CD4-positive, alpha-beta memory T cell (primary cell): ENCODE measurements at regions of chr6 and their contacts with region 1.

Region 1: GRCh38 chr6:33271458-33272274 is at the starts of genes RPS18 and VPS52:
- DNase-seq: peak; percentile 95 to 98 (median 96)
- H3K4me3 ChIP-seq: peak within 1 kb of the TSS; percentile 75 to 90
- H3K4me3 Mint-ChIP-seq: peak within 1 kb of the TSS; percentile 96 to 100 (median 98)
- H3K27ac ChIP-seq: peak within 1 kb of the TSS; percentile 85
- H3K27ac Mint-ChIP-seq: peak within 1 kb of the TSS; percentile 97 to 100 (median 99)
- H3K4me1 ChIP-seq: peaks cover 62% of the 10 kb centered on the region
- H3K4me1 Mint-ChIP-seq: peaks cover 43 to 78% (median 61%) of the 10 kb centered on the region in 4 donors
- H3K27me3 ChIP-seq: no peaks in the 10 kb centered on the region
- H3K27me3 Mint-ChIP-seq: no peaks in the 10 kb centered on the region
- total RNA-seq, gene RPS18: 3,264 to 3,439 TPM
- total RNA-seq, gene VPS52: 89.4 to 95.7 TPM

Region 2: DNA sequence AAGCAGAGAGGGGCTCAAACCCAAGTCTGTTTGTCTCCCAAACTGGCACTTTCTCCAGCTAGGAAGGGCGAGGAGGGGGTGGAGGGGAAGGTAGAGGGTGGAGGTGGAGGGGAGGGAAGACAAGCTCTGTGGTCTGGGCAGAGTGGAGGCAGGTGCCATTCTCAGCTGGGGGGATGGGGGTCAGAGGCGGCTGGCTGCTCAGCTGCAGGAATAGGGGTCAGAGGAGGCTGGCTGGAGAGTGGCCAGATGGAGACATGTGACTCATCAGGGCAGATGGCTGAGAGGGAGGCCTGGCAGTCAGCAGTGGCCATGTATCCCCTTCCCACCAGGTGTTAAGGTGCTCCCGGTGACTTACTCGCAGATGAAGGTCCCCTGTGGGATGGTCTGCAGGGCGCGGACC is 1389.3 kb before region 1 on chr6:
- CTCF ChIA-PET with region 1: no interaction called
- POLR2A ChIA-PET with region 1: no interaction called
- intact Hi-C with region 1: no loop called
- DNase-seq: no peak
- H3K4me3 ChIP-seq: no peak overlapping the region
- H3K4me3 Mint-ChIP-seq: no peak overlapping the region
- H3K27ac ChIP-seq: no peak overlapping the region
- H3K27ac Mint-ChIP-seq: no peak overlapping the region
- H3K4me1 ChIP-seq: no peaks in the 10 kb centered on the region
- H3K4me1 Mint-ChIP-seq: peaks cover 0 to 4% (median 0%) of the 10 kb centered on the region in 4 donors
- H3K27me3 ChIP-seq: no peaks in the 10 kb centered on the region
- H3K27me3 Mint-ChIP-seq: no peaks in the 10 kb centered on the region

Region 3: GRCh38 chr6:33208091-33208967 is 63.3 kb before region 1 on chr6 and contains the start of gene RING1:
- CTCF ChIA-PET with region 1: no interaction called
- POLR2A ChIA-PET with region 1: interaction called, 21 read pairs
- intact Hi-C with region 1: no loop called
- DNase-seq: peak; percentile 87 to 90 (median 87)
- H3K4me3 ChIP-seq: peak within 1 kb of the TSS; percentile 75 to 78
- H3K4me3 Mint-ChIP-seq: peak within 1 kb of the TSS; percentile 88 to 97 (median 92)
- H3K27ac ChIP-seq: peak within 1 kb of the TSS; percentile 85
- H3K27ac Mint-ChIP-seq: peak within 1 kb of the TSS; percentile 88 to 96 (median 95)
- H3K4me1 ChIP-seq: peaks cover 44% of the 10 kb centered on the region
- H3K4me1 Mint-ChIP-seq: peaks cover 32 to 61% (median 43%) of the 10 kb centered on the region in 4 donors
- H3K27me3 ChIP-seq: no peaks in the 10 kb centered on the region
- H3K27me3 Mint-ChIP-seq: peaks cover 3 to 12% of the 10 kb centered on the region in 2 donors
- total RNA-seq, gene RING1: 36.8 to 38.4 TPM

Region 4: DNA sequence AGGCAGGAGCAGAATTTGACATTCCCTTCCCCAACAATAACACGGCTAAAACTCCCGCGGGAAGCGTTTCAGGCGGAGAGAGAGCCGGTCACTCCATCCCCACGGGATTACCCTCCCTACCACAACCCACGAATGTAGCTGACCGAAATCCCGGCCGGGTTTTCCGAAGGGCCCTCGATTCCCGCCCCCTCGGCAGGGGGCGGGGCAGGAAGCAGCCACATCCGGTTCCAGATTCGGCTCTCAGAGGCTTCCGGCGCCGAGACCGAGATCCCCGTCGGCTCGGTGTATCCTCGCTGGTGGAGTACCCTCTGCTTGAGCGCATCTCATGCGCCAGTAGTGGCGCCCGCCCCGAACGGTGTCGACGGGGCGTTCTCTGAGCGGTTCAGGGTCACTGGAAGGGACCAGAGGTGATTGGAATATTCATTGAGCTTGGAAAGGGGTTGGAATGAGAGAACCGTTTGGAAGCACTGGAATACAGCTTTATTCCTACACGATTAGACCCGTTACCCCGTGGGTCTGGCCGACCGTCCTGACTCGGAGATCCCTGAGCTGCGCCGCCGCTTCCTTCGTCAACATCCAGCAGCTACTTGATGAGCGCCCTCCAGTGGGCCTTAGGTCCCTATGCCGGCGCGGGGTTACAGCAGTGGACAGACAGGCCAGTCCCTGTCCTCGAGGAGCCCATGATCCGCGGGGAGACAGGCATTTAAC is 27.7 kb after region 1 on chr6:
- CTCF ChIA-PET with region 1: interaction called, 12 read pairs
- POLR2A ChIA-PET with region 1: interaction called, 220 read pairs
- intact Hi-C with region 1: loop called (anchors 1 kb)
- DNase-seq: peak; percentile 91 to 94 (median 93)
- H3K4me3 ChIP-seq: peak overlapping the region; percentile 71 to 97
- H3K4me3 Mint-ChIP-seq: peak overlapping the region; percentile 99
- H3K27ac ChIP-seq: peak overlapping the region; percentile 94
- H3K27ac Mint-ChIP-seq: peak overlapping the region; percentile 96 to 100 (median 99)
- H3K4me1 ChIP-seq: peaks cover 27% of the 10 kb centered on the region
- H3K4me1 Mint-ChIP-seq: peaks cover 22 to 42% (median 31%) of the 10 kb centered on the region in 4 donors
- H3K27me3 ChIP-seq: no peaks in the 10 kb centered on the region
- H3K27me3 Mint-ChIP-seq: peaks cover 0 to 4% of the 10 kb centered on the region in 2 donors

Region 5: GRCh38 chr6:33323623-33323948 is 51.9 kb after region 1 on chr6:
- CTCF ChIA-PET with region 1: interaction called, 10 read pairs
- POLR2A ChIA-PET with region 1: interaction called, 40 read pairs
- intact Hi-C with region 1: loop called (anchors 1 kb)
- DNase-seq: no peak
- H3K4me3 ChIP-seq: peak overlapping the region; percentile 53 to 68
- H3K4me3 Mint-ChIP-seq: peak overlapping the region; percentile 94 to 100 (median 98)
- H3K27ac ChIP-seq: peak overlapping the region; percentile 88
- H3K27ac Mint-ChIP-seq: peak overlapping the region; percentile 89 to 100 (median 96)
- H3K4me1 ChIP-seq: peaks cover 47% of the 10 kb centered on the region
- H3K4me1 Mint-ChIP-seq: peaks cover 32 to 59% (median 46%) of the 10 kb centered on the region in 4 donors
- H3K27me3 ChIP-seq: no peaks in the 10 kb centered on the region
- H3K27me3 Mint-ChIP-seq: no peaks in the 10 kb centered on the region

Region 6: DNA sequence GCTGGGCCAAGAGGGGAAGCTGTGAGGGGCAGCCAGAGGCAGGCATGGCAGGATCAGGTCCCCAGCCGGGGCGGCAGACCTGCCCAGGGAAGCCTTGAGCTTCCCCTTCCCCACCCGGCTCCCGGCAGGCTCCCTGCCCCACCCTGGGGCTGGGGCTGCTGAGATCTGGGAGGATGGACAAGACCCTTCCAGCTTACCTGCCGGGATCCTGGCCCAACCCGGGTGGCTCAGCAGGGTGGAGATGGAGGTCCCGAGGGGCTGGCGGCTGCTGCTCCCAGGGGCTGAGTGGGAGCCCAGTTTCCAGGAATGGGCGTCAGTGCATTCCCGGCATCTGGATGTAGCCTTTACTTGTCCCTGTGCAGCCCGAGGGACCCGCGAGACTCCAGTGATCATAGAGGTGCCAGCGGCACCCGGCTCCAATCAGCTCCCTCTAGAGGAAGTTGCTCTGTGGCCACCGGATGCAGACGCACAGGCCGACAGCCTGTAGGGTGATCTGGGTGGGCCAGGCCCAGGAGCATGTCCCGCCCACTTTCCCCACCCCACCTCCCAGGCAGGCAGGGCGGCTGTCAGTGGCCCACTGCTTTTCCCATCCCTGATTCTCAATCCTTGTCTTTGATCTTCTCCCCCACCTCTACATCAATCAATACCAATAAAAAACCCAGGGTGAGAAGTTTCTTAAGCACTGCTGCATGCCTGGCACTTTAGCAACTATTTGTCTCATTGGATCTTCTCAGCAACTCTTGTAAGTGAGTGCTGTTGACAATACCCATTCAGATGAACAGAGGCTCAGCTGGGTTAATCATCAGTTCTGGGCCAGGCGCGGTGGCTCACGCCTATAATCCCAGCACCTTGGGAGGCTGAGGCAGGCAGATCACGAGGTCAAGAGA is 308.4 kb after region 1 on chr6 and contains the start of gene BAK1:
- CTCF ChIA-PET with region 1: no interaction called
- POLR2A ChIA-PET with region 1: interaction called, 8 read pairs
- intact Hi-C with region 1: loop called (anchors 10 kb)
- DNase-seq: peak; percentile 78 to 89 (median 79)
- H3K4me3 ChIP-seq: peak within 1 kb of the TSS; percentile 88 to 98
- H3K4me3 Mint-ChIP-seq: peak within 1 kb of the TSS; percentile 93 to 100 (median 98)
- H3K27ac ChIP-seq: peak within 1 kb of the TSS; percentile 90
- H3K27ac Mint-ChIP-seq: peak within 1 kb of the TSS; percentile 98 to 100 (median 99)
- H3K4me1 ChIP-seq: peaks cover 31% of the 10 kb centered on the region
- H3K4me1 Mint-ChIP-seq: peaks cover 14 to 58% (median 32%) of the 10 kb centered on the region in 4 donors
- H3K27me3 ChIP-seq: no peaks in the 10 kb centered on the region
- H3K27me3 Mint-ChIP-seq: no peaks in the 10 kb centered on the region
- total RNA-seq, gene BAK1: 26.2 to 27.2 TPM